ENCODE measurements at regions of chr4 and their contacts with region 1.

Region 1: GRCh38 chr4:100872811-100873210 is 355.0 kb upstream of the EMCN start:
- DNase-seq: no peak
- H3K4me3 ChIP-seq: no peak overlapping the region
- H3K27ac ChIP-seq: no peak overlapping the region
- H3K4me1 ChIP-seq: no peaks in the 10 kb centered on the region
- H3K27me3 ChIP-seq: no peaks in the 10 kb centered on the region
- CTCF ChIP-seq: no peak

Region 2: DNA sequence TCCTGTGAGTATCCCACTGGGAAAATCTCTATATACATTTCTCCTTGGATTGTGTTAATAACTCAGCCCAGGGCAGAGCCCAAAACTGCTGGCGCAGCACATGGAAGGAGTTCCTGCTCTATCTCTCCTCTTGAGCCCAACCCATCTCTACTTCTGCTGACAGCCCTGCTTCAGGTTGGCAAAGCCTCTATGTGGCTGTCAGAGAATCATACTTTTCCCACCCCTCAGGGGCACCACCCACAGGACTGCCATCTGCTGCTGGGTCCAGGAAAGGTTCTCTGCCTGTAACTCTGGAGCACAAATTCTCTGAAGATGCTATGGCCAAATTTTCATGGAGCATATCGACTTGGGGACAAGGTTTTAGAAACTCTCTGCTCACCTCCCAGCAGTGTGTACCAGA is 76.5 kb before region 1 on chr4:
- CTCF ChIA-PET with region 1: no interaction called
- POLR2A ChIA-PET with region 1: no interaction called
- intact Hi-C with region 1: no loop called
- DNase-seq: no peak
- H3K4me3 ChIP-seq: no peak overlapping the region
- H3K27ac ChIP-seq: no peak overlapping the region
- H3K4me1 ChIP-seq: no peaks in the 10 kb centered on the region
- H3K27me3 ChIP-seq: no peaks in the 10 kb centered on the region
- CTCF ChIP-seq: no peak

Region 3: DNA sequence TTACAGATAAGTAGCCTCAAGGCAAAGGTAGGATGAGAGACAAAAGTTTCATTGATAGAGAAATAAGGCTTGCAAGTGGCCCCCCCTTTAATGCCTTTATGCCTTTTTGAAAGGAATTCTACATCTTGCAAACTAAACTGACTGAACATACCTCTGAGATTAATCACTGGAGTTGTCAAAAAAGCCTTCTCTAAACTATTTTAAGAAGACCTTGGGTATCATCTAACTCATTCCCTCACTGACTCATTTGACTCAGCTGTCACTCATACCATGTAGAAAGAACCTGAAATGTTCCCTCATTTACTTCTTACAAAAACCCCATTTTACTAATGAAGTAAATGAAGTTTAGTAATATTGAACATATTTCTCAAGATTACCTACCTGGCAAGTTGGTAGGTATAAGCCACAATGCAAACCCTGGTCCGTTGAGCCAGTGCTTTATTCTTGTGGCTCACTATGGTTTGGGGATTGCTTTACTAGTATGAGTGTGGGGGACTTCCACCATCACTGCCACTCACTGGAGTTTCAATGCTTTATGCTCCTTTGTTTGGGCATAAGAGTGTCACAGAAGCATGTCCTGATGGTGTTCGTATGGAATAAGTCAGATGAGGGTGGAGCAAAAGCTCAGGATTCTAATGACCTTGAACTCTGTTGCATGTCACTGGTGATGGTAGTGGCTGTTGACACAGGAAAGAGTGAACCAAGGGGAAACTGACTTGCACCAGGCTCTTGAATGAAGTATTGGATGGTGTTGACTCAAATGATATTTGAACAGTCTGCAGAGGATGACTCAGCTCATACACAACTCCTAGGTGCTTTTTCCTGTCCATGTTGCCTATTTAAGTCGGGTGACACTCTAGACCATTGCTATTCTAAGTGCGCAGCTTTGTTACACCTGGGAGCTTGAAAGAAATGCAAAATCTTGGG is 49.5 kb before region 1 on chr4:
- CTCF ChIA-PET with region 1: no interaction called
- POLR2A ChIA-PET with region 1: no interaction called
- intact Hi-C with region 1: loop called (anchors 1 kb)
- DNase-seq: peak in 1 of 2 experiments; percentile 51
- H3K4me3 ChIP-seq: no peak overlapping the region
- H3K27ac ChIP-seq: no peak overlapping the region
- H3K4me1 ChIP-seq: peaks cover 11% of the 10 kb centered on the region; the same call in 1 of the 2 replicates
- H3K27me3 ChIP-seq: no peaks in the 10 kb centered on the region
- CTCF ChIP-seq: no peak

Region 4: DNA sequence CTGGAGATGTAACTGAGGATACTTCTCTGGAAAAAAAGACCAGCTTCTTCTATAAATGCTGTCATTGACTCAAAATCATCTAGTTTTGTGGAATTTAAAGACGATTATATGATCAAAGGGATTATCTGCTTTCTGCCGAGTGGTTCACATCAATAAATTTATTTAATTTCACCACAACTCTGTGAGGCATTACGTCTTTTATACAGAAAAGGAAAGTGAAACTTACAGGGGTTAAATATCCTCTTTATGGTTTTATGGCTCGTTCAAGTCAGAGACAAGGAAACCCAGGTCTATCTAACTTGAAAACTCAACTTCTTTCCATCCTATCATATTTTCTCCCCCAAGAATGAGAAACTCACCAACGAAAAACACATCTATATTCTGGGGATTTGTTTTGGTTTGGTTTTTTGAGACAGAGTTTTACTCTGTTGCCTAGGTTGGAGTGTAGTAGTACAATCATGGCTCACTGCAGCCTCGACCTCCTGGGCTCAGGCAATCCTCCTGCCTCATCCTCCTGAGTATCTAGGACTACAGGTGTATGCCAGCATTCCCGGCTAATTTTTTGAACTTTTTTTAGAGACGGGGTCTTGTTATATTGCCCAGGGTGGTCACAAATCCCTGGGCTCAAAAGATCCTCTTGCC is 22.9 kb after region 1 on chr4:
- CTCF ChIA-PET with region 1: no interaction called
- POLR2A ChIA-PET with region 1: no interaction called
- intact Hi-C with region 1: no loop called
- DNase-seq: no peak
- H3K4me3 ChIP-seq: no peak overlapping the region
- H3K27ac ChIP-seq: no peak overlapping the region
- H3K4me1 ChIP-seq: no peaks in the 10 kb centered on the region
- H3K27me3 ChIP-seq: no peaks in the 10 kb centered on the region
- CTCF ChIP-seq: no peak

Measured in PC-9 (cell line).